ENCODE measurements at regions of chr20 and their contacts with region 1.

Region 1: DNA sequence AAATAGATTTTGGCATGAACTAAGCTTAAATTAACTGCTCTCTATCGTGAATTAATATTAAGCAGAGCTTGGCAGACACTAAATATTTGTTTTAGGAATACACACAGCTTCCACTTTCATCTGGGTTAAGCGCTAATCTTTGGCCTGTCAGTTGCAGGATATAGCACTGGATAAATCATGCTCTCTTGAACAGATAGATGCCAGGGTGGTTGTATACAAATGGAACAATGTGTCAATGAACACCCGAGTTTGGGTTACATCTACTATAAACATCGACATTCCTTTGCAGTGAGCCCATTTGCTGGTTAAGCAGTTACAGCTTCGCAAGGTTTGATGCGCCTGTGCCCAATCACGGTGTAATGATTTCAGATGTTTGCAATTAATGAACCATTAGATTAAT is 338.2 kb upstream of the ZFP64 start:
- DNase-seq: no peak
- ATAC-seq: no peak
- H3K4me3 ChIP-seq: no peak overlapping the region
- H3K27ac ChIP-seq: no peak overlapping the region
- H3K4me1 ChIP-seq: no peaks in the 10 kb centered on the region
- H3K27me3 ChIP-seq: no peaks in the 10 kb centered on the region

Region 2: DNA sequence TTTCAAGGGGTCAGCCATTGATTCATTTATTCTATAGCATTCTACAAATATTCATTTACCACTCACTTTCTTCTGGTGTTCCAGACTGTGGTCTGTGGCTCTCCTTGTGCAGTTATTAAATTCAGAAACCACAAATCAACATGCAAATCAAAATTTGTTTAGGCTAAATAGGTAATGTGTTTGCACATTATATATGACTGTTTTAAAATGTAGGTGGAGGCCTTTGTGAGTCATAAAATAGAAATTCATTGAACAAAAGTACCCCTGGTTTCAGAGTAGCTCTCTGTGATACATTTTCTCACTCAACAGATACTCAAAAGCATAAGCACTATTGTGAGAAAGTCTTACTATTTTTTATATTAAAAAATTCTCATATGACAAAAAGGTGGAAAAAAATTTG is 56.8 kb after region 1 on chr20:
- intact Hi-C with region 1: loop called in 1 of 2 experiments (anchors 10 kb)
- DNase-seq: no peak
- ATAC-seq: no peak
- H3K4me3 ChIP-seq: no peak overlapping the region
- H3K27ac ChIP-seq: no peak overlapping the region
- H3K4me1 ChIP-seq: no peaks in the 10 kb centered on the region
- H3K27me3 ChIP-seq: no peaks in the 10 kb centered on the region

Measured in aorta (tissue), 5 donors.